ENCODE measurements at regions of chr20 and their contacts with region 1.

Region 1: GRCh38 chr20:4720041-4720976 is 1.4 kb upstream of the PRND start:
- DNase-seq: peak; percentile 59 to 80 (median 77)
- ATAC-seq: peak; percentile 87
- H3K4me3 ChIP-seq: no peak overlapping the region
- H3K4me1 ChIP-seq: no peaks in the 10 kb centered on the region
- CTCF ChIP-seq: peak; percentile 15

Region 2: GRCh38 chr20:4585104-4585753 is 135.1 kb before region 1 on chr20:
- intact Hi-C with region 1: no loop called
- DNase-seq: no peak
- ATAC-seq: no peak
- H3K4me3 ChIP-seq: no peak overlapping the region
- H3K4me1 ChIP-seq: no peaks in the 10 kb centered on the region
- CTCF ChIP-seq: no peak

Region 3: GRCh38 chr20:4607287-4607713 is 113.0 kb before region 1 on chr20:
- intact Hi-C with region 1: loop called (anchors 2 to 5 kb)
- DNase-seq: peak in 1 of 3 donors; percentile 66
- ATAC-seq: peak; percentile 79
- H3K4me3 ChIP-seq: no peak overlapping the region
- H3K4me1 ChIP-seq: no peaks in the 10 kb centered on the region
- CTCF ChIP-seq: peak; percentile 82